CD8-positive, alpha-beta T cell (primary cell): ENCODE measurements at regions of chr4 and their contacts with region 1.

Region 1: GRCh38 chr4:98995183-98996055 is at the start of gene METAP1:
- DNase-seq: peak; percentile 91 to 99 (median 96)
- ATAC-seq: peak; percentile 83
- H3K4me3 ChIP-seq: peak within 1 kb of the TSS; percentile 79 to 87
- H3K4me3 Mint-ChIP-seq: peak within 1 kb of the TSS; percentile 89
- H3K27ac ChIP-seq: peak within 1 kb of the TSS; percentile 77 to 83
- H3K27ac Mint-ChIP-seq: peak within 1 kb of the TSS; percentile 98
- H3K4me1 ChIP-seq: peaks cover 21% of the 10 kb centered on the region
- H3K4me1 Mint-ChIP-seq: peaks cover 39% of the 10 kb centered on the region
- H3K27me3 ChIP-seq: no peaks in the 10 kb centered on the region
- H3K27me3 Mint-ChIP-seq: no peaks in the 10 kb centered on the region
- CTCF ChIP-seq: peak; percentile 66
- total RNA-seq, gene METAP1: 21.0 to 23.2 TPM

Region 2: DNA sequence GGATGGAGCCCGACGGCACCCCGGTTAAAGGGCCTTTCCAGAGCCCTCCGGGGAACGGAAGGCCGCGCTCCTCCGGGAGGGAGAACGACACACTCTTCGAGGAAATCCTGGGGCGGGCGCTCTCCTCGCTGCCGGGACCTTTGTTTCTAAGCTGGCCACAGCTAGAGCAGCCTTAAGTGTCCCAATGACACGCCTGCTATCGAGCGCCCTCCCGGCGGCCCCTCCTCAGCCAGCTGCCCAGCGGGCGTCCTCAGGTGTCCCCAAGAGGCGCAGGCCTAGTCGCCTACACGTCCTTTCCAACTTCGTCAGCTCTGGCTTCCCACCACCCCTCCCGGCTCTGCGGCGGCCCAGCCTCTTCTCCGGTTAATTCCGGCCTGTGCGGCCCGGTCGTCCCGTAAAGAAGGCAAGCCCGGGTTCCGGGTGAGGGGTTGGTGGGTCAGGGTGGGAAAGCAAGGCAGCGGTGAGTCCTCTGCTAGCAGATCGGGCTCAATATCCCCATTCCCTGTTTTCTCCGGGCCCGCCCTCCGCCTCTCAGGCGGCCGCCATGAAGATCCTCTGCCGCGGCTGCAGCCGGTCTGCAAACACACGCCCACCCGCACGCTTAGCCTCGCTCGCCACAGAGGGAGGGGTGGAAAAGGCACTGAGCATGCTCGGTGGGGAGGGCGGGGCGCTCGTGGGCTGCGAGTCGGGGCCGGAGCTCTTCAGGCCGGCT is 734.7 kb before region 1 on chr4:
- CTCF ChIA-PET with region 1: interaction called, 6 read pairs
- POLR2A ChIA-PET with region 1: interaction called, 12 read pairs
- intact Hi-C with region 1: loop called in 1 of 2 experiments (anchors 2 kb)
- DNase-seq: peak; percentile 67 to 95 (median 88)
- ATAC-seq: peak; percentile 72
- H3K4me3 ChIP-seq: peak overlapping the region; percentile 89 to 96
- H3K4me3 Mint-ChIP-seq: peak overlapping the region; percentile 94
- H3K27ac ChIP-seq: peak overlapping the region; percentile 77 to 79
- H3K27ac Mint-ChIP-seq: peak overlapping the region; percentile 95
- H3K4me1 ChIP-seq: peaks cover 27% of the 10 kb centered on the region
- H3K4me1 Mint-ChIP-seq: peaks cover 51% of the 10 kb centered on the region
- H3K27me3 ChIP-seq: no peaks in the 10 kb centered on the region
- H3K27me3 Mint-ChIP-seq: no peaks in the 10 kb centered on the region
- CTCF ChIP-seq: no peak

Region 3: DNA sequence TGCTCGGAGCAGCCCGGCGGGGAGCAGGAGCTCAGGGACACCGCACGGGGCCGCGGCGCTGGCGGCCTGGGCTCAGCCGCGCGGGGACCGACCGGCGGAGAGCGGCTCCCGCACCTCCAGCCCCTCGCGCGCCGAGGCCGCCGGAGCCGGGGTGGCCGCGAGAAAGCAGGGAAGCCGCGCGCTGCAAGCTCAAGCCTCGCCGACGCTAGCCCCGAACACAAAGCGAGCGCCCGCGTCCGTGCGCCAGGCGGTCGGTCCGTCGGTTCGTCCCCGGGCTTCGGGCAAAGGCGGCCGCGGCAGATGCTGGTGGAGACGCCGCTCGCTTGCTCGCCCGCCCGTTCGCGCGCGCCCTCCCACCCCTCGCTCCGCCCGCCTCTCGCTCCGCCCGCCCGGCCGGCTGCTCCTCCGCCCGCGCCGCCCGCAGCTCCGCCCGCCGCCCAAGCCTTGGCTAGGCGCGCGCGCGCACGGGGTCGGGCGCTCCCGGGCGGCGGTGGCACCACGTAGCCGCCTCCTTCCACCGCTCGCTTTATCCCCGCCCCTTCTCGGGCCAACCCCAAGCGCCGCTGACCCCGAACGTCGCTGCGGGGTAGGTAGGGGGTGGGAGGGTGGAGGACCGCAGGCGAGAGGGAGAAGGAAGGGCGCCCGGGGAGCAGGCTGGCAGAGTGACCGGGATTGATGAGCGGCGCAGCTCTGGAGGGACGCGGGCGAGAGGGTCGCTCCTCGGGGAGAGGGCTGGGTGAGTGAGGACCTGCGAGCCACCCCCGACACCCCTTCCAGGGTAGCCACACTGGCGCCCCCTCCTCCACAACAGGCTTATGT is 336.9 kb before region 1 on chr4 and contains the start of gene TSPAN5:
- CTCF ChIA-PET with region 1: no interaction called
- POLR2A ChIA-PET with region 1: no interaction called
- intact Hi-C with region 1: loop called (anchors 2 to 5 kb)
- DNase-seq: peak; percentile 49 to 90 (median 82)
- ATAC-seq: peak; percentile 64
- H3K4me3 ChIP-seq: peak within 1 kb of the TSS; percentile 81 to 86
- H3K4me3 Mint-ChIP-seq: peak within 1 kb of the TSS; percentile 97
- H3K27ac ChIP-seq: peak within 1 kb of the TSS; percentile 14 to 60
- H3K27ac Mint-ChIP-seq: peak within 1 kb of the TSS; percentile 88
- H3K4me1 ChIP-seq: peaks cover 56% of the 10 kb centered on the region
- H3K4me1 Mint-ChIP-seq: peaks cover 80% of the 10 kb centered on the region
- H3K27me3 ChIP-seq: no peaks in the 10 kb centered on the region
- H3K27me3 Mint-ChIP-seq: no peaks in the 10 kb centered on the region
- CTCF ChIP-seq: no peak
- total RNA-seq, gene TSPAN5: 1.6 to 1.9 TPM

Region 4: GRCh38 chr4:99043346-99043745 is 47.9 kb after region 1 on chr4:
- CTCF ChIA-PET with region 1: interaction called, 251 read pairs
- POLR2A ChIA-PET with region 1: interaction called, 18 read pairs
- intact Hi-C with region 1: loop called in 1 of 2 experiments (anchors 5 kb)
- DNase-seq: peak in 2 of 9 experiments; percentile 54 to 75
- ATAC-seq: peak; percentile 96
- H3K4me3 ChIP-seq: no peak overlapping the region
- H3K4me3 Mint-ChIP-seq: peak overlapping the region; percentile 20
- H3K27ac ChIP-seq: peak overlapping the region; percentile 54 to 85
- H3K27ac Mint-ChIP-seq: peak overlapping the region; percentile 84
- H3K4me1 ChIP-seq: peaks cover 20% of the 10 kb centered on the region
- H3K4me1 Mint-ChIP-seq: peaks cover 19% of the 10 kb centered on the region
- H3K27me3 ChIP-seq: no peaks in the 10 kb centered on the region
- H3K27me3 Mint-ChIP-seq: no peaks in the 10 kb centered on the region
- CTCF ChIP-seq: no peak

Region 5: GRCh38 chr4:99405433-99406115 is 410.2 kb after region 1 on chr4:
- CTCF ChIA-PET with region 1: interaction called, 15 read pairs
- POLR2A ChIA-PET with region 1: no interaction called
- intact Hi-C with region 1: loop called (anchors 1 to 2 kb)
- DNase-seq: peak; percentile 34 to 71 (median 56)
- ATAC-seq: peak; percentile 70
- H3K4me3 ChIP-seq: no peak overlapping the region
- H3K4me3 Mint-ChIP-seq: no peak overlapping the region
- H3K27ac ChIP-seq: no peak overlapping the region
- H3K27ac Mint-ChIP-seq: no peak overlapping the region
- H3K4me1 ChIP-seq: no peaks in the 10 kb centered on the region
- H3K4me1 Mint-ChIP-seq: no peaks in the 10 kb centered on the region
- H3K27me3 ChIP-seq: no peaks in the 10 kb centered on the region
- H3K27me3 Mint-ChIP-seq: no peaks in the 10 kb centered on the region
- CTCF ChIP-seq: peak; percentile 93

Region 6: DNA sequence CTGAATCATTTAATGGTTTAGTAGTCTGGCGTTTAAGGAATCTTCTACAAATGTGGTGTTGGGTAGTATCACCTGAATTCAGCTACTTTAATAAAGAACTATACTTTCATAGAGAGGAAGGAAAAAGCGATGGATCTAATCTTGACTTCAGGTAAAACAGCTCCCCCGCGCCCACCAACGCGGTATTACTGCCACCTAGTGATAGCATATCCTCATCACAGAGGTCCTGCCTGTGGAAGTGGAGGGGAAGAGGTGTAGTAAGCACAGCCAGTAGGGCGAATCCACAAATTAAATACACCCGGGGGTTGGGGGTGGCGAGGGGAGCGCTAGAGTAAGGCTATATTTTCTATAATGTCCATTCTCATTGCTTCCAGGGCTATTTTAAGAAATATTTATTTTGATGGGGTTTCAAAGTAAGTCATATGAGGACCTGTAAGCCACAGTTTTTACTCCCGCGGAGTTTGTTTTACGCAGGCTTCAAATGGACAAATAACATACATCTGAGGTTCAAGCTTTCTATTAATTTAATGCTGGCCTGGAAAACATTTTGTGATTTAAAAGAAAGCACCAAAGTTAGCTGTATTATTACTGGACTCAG is 812.9 kb after region 1 on chr4:
- CTCF ChIA-PET with region 1: no interaction called
- POLR2A ChIA-PET with region 1: no interaction called
- intact Hi-C with region 1: loop called in 1 of 2 experiments (anchors 10 kb)
- DNase-seq: peak; percentile 46 to 80 (median 69)
- ATAC-seq: peak; percentile 97
- H3K4me3 ChIP-seq: no peak overlapping the region
- H3K4me3 Mint-ChIP-seq: no peak overlapping the region
- H3K27ac ChIP-seq: no peak overlapping the region
- H3K27ac Mint-ChIP-seq: no peak overlapping the region
- H3K4me1 ChIP-seq: no peaks in the 10 kb centered on the region
- H3K4me1 Mint-ChIP-seq: peaks cover 4% of the 10 kb centered on the region
- H3K27me3 ChIP-seq: no peaks in the 10 kb centered on the region
- H3K27me3 Mint-ChIP-seq: peaks cover 14% of the 10 kb centered on the region
- CTCF ChIP-seq: peak; percentile 93

Region 7: DNA sequence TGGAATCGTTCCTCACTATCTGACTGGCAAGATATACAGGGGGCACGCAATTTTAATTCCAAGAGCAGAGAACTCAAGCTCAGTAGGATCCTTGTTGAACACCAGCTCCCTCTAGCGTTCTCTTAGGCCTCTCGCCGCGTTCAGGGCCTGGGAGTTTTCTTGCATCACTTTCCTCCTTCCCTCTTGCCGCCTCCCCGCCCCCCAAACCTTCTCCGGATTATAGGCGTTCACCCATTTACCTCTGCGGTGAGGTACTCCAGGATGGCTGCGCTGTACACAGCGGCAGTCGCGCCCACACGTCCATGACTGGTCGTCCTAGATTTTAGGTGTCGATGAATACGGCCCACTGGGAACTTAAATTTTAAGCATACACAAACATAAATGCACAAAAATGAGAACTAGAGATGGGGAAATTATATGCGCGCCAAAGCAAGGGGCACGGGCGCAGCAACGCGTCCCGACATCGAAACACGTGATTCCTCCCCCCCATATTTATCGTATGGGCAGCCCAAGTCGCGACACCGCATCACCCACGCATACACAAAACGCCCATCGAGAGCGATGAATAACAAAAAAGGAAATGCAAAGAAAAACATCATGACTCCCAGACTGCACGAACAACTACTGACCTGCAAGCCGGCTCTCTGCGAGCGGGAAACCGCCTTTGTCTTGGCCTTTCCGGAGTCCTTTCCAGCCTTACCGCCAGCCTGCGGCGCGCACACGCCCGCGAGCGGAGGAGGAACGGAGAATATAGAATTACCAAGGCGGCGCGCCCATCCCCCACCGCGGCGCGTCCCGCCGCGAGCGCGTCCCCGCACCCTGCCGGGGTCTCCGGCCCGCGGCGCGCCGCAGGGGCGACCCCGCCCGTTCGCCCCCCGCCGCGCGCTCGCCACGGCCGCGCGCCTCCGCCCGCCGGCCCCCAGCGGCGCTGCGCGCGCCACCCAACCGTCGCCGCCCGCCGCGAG is 953.9 kb after region 1 on chr4:
- CTCF ChIA-PET with region 1: no interaction called
- POLR2A ChIA-PET with region 1: no interaction called
- intact Hi-C with region 1: loop called (anchors 1 to 5 kb)
- DNase-seq: peak; percentile 67 to 95 (median 88)
- ATAC-seq: peak; percentile 32
- H3K4me3 ChIP-seq: peak overlapping the region; percentile 89 to 97
- H3K4me3 Mint-ChIP-seq: no peak overlapping the region
- H3K27ac ChIP-seq: peak overlapping the region; percentile 85 to 97
- H3K27ac Mint-ChIP-seq: no peak overlapping the region
- H3K4me1 ChIP-seq: peaks cover 37% of the 10 kb centered on the region
- H3K4me1 Mint-ChIP-seq: peaks cover 35% of the 10 kb centered on the region
- H3K27me3 ChIP-seq: no peaks in the 10 kb centered on the region
- H3K27me3 Mint-ChIP-seq: no peaks in the 10 kb centered on the region
- CTCF ChIP-seq: peak; percentile 58